Motor neuron (in vitro differentiated cells): ENCODE measurements at regions of chr20 and their contacts with region 1.

Region 1: DNA sequence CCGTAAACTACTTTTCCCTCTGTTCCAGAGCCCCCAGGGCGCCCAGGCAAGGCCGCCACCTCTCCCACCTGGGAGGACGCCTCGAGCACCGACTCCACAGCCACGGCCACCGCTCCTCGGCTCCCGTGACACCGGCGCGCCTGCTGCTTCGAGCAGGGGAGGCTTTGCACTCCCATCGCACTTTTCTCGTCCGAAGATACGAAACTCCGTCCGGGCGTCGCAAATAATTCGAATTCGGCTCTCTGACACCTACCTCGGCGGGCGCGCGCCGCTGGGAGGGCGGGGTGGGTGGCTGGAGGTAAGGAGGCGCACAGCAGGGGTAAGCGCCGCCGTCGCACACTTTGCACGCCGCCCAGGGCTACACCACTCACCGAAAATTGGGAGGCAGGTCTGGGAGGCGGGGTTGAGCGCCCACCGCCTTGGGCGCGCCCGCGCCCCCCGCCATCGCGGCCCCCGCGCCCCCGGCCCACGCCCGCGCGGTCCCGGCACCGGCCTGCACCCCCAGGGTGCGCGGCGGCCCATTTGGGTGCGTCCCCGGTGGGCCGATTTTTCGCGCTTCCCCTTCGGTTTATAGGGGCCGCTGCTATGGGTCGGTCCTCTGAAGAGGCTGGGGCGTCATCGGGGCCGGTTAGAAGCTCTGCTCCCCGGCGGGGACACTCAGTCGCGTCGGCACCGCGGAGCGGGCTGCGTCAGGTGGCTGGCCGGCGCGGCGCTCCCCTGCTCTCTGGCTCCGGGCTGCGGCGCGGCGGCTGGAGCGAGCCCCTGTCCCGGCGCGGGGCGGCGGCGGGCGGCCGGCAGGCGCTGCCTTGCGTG is 36.2 kb downstream of the GNAS start:
- ATAC-seq: peak; percentile 42 to 69 (median 58)
- H3K4me3 ChIP-seq: peak overlapping the region; percentile 76 to 98 (median 96)
- H3K27ac ChIP-seq: peak overlapping the region; percentile 93 to 99
- H3K4me1 ChIP-seq: peaks cover 4 to 6% of the 10 kb centered on the region in 2 donors

Region 2: GRCh38 chr20:58760856-58761255 is 127.9 kb before region 1 on chr20:
- in situ Hi-C with region 1: no loop called
- ATAC-seq: no peak
- H3K4me3 ChIP-seq: no peak overlapping the region
- H3K27ac ChIP-seq: no peak overlapping the region
- H3K4me1 ChIP-seq: peaks cover 5 to 12% of the 10 kb centered on the region in 2 donors

Region 3: DNA sequence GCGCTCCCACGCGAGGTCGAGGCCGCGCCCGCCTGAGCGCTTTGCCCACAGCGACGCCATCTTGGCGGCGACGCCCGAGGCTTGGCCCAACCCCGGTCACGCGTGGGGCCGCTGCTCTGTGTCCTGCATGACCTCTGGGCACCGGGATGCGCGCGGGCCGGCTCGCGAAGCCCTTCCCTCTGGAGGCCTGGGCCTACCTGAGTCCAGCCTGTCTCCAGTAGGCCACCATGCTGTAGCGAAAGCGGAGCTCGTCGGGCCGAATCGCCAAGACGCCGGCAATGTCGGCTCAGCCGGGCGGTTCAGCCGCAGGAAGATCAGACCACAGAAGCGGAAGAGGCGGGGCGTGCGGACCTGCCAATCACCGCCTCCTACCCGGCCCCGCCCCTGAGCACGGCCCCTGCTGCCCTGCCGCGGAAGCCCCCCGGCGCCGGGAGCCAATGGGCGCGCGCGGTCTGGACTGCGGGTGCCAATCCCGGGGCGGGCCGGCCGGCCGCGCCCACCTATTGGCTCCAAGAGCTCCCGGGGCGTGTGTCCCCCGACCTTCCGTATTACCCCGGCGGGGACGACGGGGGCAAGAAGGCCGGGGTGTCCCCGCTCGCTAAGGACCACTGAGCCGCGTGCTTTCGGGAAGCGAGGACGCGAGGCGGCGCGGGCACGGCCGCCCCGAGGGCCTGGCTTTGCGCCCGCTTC is 143.4 kb after region 1 on chr20 and contains the start of gene ATP5F1E:
- in situ Hi-C with region 1: loop called in 1 of 9 experiments (anchors 25 kb)
- ATAC-seq: peak; percentile 95 to 99 (median 98)
- H3K4me3 ChIP-seq: peak within 1 kb of the TSS; percentile 79 to 96 (median 82)
- H3K27ac ChIP-seq: peak within 1 kb of the TSS; percentile 93
- H3K4me1 ChIP-seq: peaks cover 17 to 48% of the 10 kb centered on the region in 2 donors
- total RNA-seq, gene ATP5F1E: 34.5 to 94.0 (median 69.8) TPM

Region 4: GRCh38 chr20:60467078-60467477 is 1578.4 kb after region 1 on chr20:
- in situ Hi-C with region 1: no loop called
- ATAC-seq: no peak
- H3K4me3 ChIP-seq: no peak overlapping the region
- H3K27ac ChIP-seq: no peak overlapping the region
- H3K4me1 ChIP-seq: peaks cover 0 to 6% of the 10 kb centered on the region in 2 donors